ENCODE measurements at regions of chr18 and their contacts with region 1.

Region 1: GRCh38 chr18:58590839-58591238 is 38.1 kb downstream of the ALPK2 start:
- DNase-seq: no peak
- ATAC-seq: peak in 1 of 2 donors; percentile 21

Region 2: DNA sequence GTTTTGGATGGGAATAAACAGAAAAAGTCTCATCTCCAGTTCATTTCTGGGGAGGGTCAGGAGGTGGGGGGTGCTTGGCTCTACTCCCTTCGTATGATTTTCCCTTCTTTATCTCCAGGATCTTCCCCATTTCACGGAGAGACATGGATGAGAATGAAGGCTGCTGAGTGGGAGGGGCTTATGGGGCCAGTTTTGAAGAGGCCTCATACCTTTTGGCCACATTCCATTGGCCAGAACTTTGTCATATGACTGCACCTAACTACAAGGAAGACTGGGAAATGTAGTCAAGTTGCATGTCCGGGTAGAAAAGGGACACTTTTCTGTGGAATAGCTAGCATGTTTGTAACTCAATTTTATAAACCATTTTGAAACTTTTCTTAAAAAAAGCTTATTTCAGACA is 429.2 kb before region 1 on chr18:
- intact Hi-C with region 1: no loop called
- DNase-seq: no peak
- ATAC-seq: no peak

Region 3: GRCh38 chr18:58761241-58761969 is 170.6 kb after region 1 on chr18:
- intact Hi-C with region 1: loop called in 1 of 2 experiments (anchors 5 kb)
- DNase-seq: no peak
- ATAC-seq: peak; percentile 37 to 39

Measured in left cardiac atrium (tissue), 4 donors.